Sigmoid colon (tissue), 7 donors: ENCODE measurements at regions of chr15 and their contacts with region 1.

Region 1: DNA sequence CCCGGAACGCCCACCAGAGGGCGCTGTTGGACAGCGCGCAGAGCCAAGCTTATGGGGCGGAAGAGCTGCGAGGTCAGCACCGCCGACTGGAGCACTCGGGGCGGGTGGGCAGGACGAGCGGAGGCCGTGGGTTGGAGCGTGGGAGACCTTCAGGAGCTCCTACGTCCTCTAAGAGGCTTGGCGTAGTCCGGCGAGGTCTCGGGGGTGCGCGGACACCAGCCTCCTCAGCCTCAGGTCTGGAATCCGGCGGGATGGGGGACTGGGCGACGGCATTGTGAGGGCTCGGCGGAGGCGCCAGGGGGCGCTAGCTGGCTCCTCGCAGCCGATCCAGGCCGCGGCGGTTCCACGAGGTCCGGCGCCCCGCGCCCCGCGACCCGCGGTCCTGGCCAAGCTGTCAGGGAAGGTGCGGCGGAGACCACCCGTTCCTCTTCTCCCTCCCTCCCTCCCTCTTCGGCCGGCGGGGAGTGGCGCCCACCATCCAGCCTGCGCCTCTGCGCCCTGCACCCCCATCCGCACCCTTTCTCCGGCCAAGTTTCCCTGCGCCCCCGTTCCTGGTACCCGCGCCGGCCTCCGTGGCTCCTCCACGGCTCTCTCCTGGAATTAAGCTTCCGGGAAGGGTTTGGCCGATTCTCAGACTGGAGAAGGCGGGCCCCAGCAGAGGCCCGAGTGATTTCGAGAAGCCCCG is 24.3 kb upstream of the POLG start:
- DNase-seq: peak; percentile 81
- H3K4me3 ChIP-seq: peak overlapping the region; percentile 11 to 50 (median 38)
- H3K27ac ChIP-seq: no peak overlapping the region
- H3K4me1 ChIP-seq: peaks cover 0 to 32% (median 17%) of the 10 kb centered on the region in 4 donors
- H3K27me3 ChIP-seq: peaks cover 44 to 100% (median 89%) of the 10 kb centered on the region in 3 donors
- CTCF ChIP-seq: peak; percentile 96 to 100 (median 98)
- EP300 ChIP-seq: no peak
- POLR2A ChIP-seq: no peak

Region 2: GRCh38 chr15:88882785-88883184 is 476.1 kb before region 1 on chr15:
- intact Hi-C with region 1: no loop called
- DNase-seq: no peak
- H3K4me3 ChIP-seq: no peak overlapping the region
- H3K27ac ChIP-seq: no peak overlapping the region
- H3K4me1 ChIP-seq: no peaks in the 10 kb centered on the region
- H3K27me3 ChIP-seq: no peaks in the 10 kb centered on the region
- CTCF ChIP-seq: no peak
- EP300 ChIP-seq: no peak
- POLR2A ChIP-seq: no peak

Region 3: GRCh38 chr15:89430530-89431341 is 71.8 kb after region 1 on chr15:
- intact Hi-C with region 1: loop called (anchors 1 kb)
- DNase-seq: peak; percentile 86
- H3K4me3 ChIP-seq: peak overlapping the region in 3 of 4 donors; percentile 35 to 42 (median 39)
- H3K27ac ChIP-seq: no peak overlapping the region
- H3K4me1 ChIP-seq: peaks cover 0 to 10% (median 6%) of the 10 kb centered on the region in 4 donors
- H3K27me3 ChIP-seq: peaks cover 0 to 5% (median 0%) of the 10 kb centered on the region in 3 donors
- CTCF ChIP-seq: peak; percentile 91 to 99 (median 98)
- EP300 ChIP-seq: no peak
- POLR2A ChIP-seq: no peak